ENCODE measurements at regions of chr16 and their contacts with region 1.

Region 1: GRCh38 chr16:77236063-77236511 is 36.9 kb downstream of the SYCE1L start:
- DNase-seq: peak; percentile 72 to 80 (median 77)
- H3K4me3 ChIP-seq: peak overlapping the region in 1 of 3 experiments; percentile 12
- H3K4me3 Mint-ChIP-seq: peak overlapping the region; percentile 39 to 63
- H3K27ac ChIP-seq: no peak overlapping the region
- H3K27ac Mint-ChIP-seq: no peak overlapping the region
- H3K4me1 ChIP-seq: no peaks in the 10 kb centered on the region
- H3K4me1 Mint-ChIP-seq: peaks cover 3% of the 10 kb centered on the region
- H3K27me3 ChIP-seq: no peaks in the 10 kb centered on the region
- H3K27me3 Mint-ChIP-seq: peaks cover 8 to 14% (median 11%) of the 10 kb centered on the region in 3 donors
- CTCF ChIP-seq: peak; percentile 98

Region 2: DNA sequence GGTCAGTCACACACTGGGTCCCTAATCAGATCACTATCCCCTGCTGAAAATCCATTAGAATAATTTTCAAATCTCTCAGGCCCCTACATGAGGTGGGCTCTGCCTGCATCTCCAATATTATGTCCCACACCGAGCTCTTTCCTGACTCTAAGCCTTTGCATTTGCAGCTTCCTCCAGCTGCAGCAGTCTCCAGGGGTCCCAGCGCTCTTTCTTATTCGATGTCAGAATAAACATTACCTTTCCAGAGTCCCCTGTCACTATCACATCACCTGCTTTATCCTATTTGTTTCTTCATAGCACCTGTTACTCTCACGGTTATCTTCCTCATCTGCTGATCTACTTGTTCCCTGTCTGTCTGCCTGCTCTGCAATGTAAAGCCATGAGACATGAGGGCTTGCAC is 102.4 kb before region 1 on chr16:
- intact Hi-C with region 1: no loop called
- DNase-seq: no peak
- H3K4me3 ChIP-seq: no peak overlapping the region
- H3K4me3 Mint-ChIP-seq: no peak overlapping the region
- H3K27ac ChIP-seq: no peak overlapping the region
- H3K27ac Mint-ChIP-seq: no peak overlapping the region
- H3K4me1 ChIP-seq: no peaks in the 10 kb centered on the region
- H3K4me1 Mint-ChIP-seq: no peaks in the 10 kb centered on the region
- H3K27me3 ChIP-seq: no peaks in the 10 kb centered on the region
- H3K27me3 Mint-ChIP-seq: peaks cover 0 to 1% (median 0%) of the 10 kb centered on the region in 3 donors
- CTCF ChIP-seq: no peak

Region 3: DNA sequence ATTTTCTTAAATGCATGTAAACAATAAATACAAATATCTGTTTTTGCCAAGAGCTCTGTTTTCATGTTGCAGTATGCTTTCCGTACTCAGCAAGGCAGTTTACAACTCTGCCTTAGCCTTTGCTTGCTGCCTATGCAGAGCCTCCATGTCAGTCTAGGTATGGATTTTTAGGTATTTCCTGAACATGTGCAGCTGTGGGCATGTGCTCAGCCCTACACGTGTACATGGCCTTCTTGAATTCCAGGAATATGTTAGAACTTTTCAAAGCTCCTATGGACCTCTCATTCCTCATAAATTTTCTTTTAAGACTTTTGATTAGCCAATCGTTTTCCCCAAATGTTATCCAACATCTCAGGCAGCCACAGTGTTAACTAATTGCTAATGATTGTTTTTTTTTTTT is 26.9 kb after region 1 on chr16:
- intact Hi-C with region 1: no loop called
- DNase-seq: no peak
- H3K4me3 ChIP-seq: no peak overlapping the region
- H3K4me3 Mint-ChIP-seq: no peak overlapping the region
- H3K27ac ChIP-seq: no peak overlapping the region
- H3K27ac Mint-ChIP-seq: no peak overlapping the region
- H3K4me1 ChIP-seq: no peaks in the 10 kb centered on the region
- H3K4me1 Mint-ChIP-seq: no peaks in the 10 kb centered on the region
- H3K27me3 ChIP-seq: no peaks in the 10 kb centered on the region
- H3K27me3 Mint-ChIP-seq: peaks cover 3% of the 10 kb centered on the region in 3 donors
- CTCF ChIP-seq: no peak

Region 4: DNA sequence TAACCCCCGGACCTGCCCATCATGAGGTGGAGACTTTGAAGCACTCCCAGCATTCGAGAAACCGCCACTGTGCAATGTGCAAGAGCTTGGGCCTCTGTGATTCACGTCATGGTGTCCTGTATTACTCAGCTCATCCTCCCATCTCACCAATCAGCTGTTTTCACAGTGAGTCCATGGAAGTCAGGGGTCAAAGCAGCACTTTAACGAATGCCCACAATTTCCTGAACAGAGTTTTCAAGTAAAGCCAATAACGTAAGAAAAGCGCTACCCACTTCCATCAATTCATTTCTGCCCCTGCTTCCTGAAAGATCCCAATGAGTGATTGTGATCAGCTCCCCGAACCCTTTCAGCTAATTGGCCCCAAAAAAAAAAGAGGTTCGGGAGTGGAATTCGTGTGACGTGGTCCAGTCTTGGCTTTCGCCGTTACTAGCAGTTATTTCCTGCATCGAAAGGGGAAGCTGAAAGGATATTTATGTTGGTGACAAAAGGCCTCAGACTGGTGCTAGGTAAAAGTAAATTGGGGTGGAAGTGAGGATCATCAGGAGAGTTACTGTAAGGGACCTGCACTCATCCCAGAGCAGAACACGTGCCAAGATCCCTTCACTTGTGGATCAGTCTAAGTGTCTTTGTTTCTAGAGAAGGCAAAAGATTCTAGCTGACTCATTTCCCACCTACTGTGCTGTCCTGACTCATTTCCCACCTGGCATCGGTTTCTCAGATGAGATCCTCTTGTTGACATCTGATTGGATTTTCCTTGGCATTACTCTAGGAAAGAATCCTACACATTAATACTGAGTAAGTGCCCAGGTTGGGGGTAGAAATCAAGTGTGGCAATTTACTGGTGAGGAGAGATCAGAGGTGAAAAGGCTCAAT is 349.5 kb after region 1 on chr16:
- intact Hi-C with region 1: loop called (anchors 2 to 5 kb)
- DNase-seq: peak in 1 of 3 donors; percentile 7
- H3K4me3 ChIP-seq: no peak overlapping the region
- H3K4me3 Mint-ChIP-seq: peak overlapping the region in 1 of 2 donors; percentile 72
- H3K27ac ChIP-seq: no peak overlapping the region
- H3K27ac Mint-ChIP-seq: no peak overlapping the region
- H3K4me1 ChIP-seq: peaks cover 0 to 3% of the 10 kb centered on the region in 2 donors
- H3K4me1 Mint-ChIP-seq: peaks cover 7% of the 10 kb centered on the region
- H3K27me3 ChIP-seq: no peaks in the 10 kb centered on the region
- H3K27me3 Mint-ChIP-seq: peaks cover 0 to 6% (median 6%) of the 10 kb centered on the region in 3 donors
- CTCF ChIP-seq: no peak

Region 5: DNA sequence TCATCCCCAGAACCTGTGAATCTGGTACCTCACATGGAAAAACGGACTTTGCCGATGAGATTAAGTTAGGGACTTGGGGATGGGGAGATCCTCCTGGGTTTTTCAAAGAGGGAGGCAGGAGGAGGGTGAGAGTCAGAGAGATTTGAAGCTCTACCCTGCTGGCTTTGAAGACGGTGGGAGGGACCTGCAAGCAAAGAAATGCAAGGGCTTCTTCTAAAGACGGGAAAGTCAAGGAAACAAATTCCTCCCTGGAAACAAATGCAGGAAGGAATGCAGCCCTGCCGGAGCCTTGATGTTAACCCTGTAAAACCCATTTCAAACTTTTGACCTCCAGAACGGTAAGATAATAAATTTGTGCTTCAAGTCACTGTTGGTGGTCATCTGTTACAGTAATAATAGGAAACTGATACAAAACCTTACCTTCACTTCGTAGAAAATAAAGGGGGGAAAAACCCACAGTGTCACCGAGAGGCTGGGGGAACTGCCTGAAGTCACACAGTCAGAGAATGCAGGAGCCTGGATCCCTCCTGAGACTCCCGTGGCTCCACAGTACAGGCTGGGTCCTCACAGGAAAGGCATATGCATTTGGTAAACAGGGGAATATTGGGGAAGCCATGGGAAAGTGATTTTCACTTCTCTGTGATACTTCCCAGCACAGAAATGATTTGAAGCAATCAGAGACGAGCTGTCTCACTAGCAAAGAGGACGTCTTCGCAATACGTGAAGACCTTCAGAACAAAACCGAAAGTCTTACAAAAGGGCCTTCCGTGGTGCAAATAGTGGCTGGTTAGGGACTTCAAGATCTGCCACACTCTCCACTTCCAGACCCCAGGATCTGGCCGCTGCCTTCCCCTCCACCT is 727.3 kb after region 1 on chr16:
- intact Hi-C with region 1: no loop called
- DNase-seq: no peak
- H3K4me3 ChIP-seq: no peak overlapping the region
- H3K4me3 Mint-ChIP-seq: peak overlapping the region in 1 of 2 donors; percentile 47
- H3K27ac ChIP-seq: no peak overlapping the region
- H3K27ac Mint-ChIP-seq: no peak overlapping the region
- H3K4me1 ChIP-seq: no peaks in the 10 kb centered on the region
- H3K4me1 Mint-ChIP-seq: no peaks in the 10 kb centered on the region
- H3K27me3 ChIP-seq: peaks cover 0 to 8% of the 10 kb centered on the region in 2 donors
- H3K27me3 Mint-ChIP-seq: peaks cover 3 to 37% (median 20%) of the 10 kb centered on the region in 3 donors
- CTCF ChIP-seq: no peak